ENCODE measurements at regions of chr14 and their contacts with region 1.

Region 1: GRCh38 chr14:76050797-76051392 is 65.3 kb downstream of the IFT43 start:
- DNase-seq: peak; percentile 8 to 68 (median 57)
- ATAC-seq: no peak
- H3K4me3 ChIP-seq: no peak overlapping the region
- H3K4me3 Mint-ChIP-seq: no peak overlapping the region
- H3K27ac ChIP-seq: no peak overlapping the region
- H3K27ac Mint-ChIP-seq: no peak overlapping the region
- H3K4me1 ChIP-seq: no peaks in the 10 kb centered on the region
- H3K4me1 Mint-ChIP-seq: no peaks in the 10 kb centered on the region
- H3K27me3 ChIP-seq: no peaks in the 10 kb centered on the region
- H3K27me3 Mint-ChIP-seq: no peaks in the 10 kb centered on the region
- CTCF ChIP-seq: peak; percentile 95

Region 2: GRCh38 chr14:76040704-76041103 is 10.2 kb before region 1 on chr14:
- CTCF ChIA-PET with region 1: interaction called, 11 read pairs
- POLR2A ChIA-PET with region 1: no interaction called
- intact Hi-C with region 1: no loop called
- DNase-seq: no peak
- ATAC-seq: no peak
- H3K4me3 ChIP-seq: no peak overlapping the region
- H3K4me3 Mint-ChIP-seq: no peak overlapping the region
- H3K27ac ChIP-seq: no peak overlapping the region
- H3K27ac Mint-ChIP-seq: no peak overlapping the region
- H3K4me1 ChIP-seq: no peaks in the 10 kb centered on the region
- H3K4me1 Mint-ChIP-seq: no peaks in the 10 kb centered on the region
- H3K27me3 ChIP-seq: no peaks in the 10 kb centered on the region
- H3K27me3 Mint-ChIP-seq: no peaks in the 10 kb centered on the region
- CTCF ChIP-seq: no peak

Region 3: GRCh38 chr14:76181546-76181945 is 130.7 kb after region 1 on chr14:
- CTCF ChIA-PET with region 1: interaction called, 3 read pairs
- POLR2A ChIA-PET with region 1: no interaction called
- intact Hi-C with region 1: loop called in 1 of 2 experiments (anchors 1 kb)
- DNase-seq: peak in 2 of 9 experiments; percentile 3 to 15
- ATAC-seq: no peak
- H3K4me3 ChIP-seq: no peak overlapping the region
- H3K4me3 Mint-ChIP-seq: no peak overlapping the region
- H3K27ac ChIP-seq: no peak overlapping the region
- H3K27ac Mint-ChIP-seq: peak overlapping the region; percentile 4
- H3K4me1 ChIP-seq: no peaks in the 10 kb centered on the region
- H3K4me1 Mint-ChIP-seq: peaks cover 8% of the 10 kb centered on the region
- H3K27me3 ChIP-seq: no peaks in the 10 kb centered on the region
- H3K27me3 Mint-ChIP-seq: no peaks in the 10 kb centered on the region
- CTCF ChIP-seq: peak; percentile 37

Region 4: DNA sequence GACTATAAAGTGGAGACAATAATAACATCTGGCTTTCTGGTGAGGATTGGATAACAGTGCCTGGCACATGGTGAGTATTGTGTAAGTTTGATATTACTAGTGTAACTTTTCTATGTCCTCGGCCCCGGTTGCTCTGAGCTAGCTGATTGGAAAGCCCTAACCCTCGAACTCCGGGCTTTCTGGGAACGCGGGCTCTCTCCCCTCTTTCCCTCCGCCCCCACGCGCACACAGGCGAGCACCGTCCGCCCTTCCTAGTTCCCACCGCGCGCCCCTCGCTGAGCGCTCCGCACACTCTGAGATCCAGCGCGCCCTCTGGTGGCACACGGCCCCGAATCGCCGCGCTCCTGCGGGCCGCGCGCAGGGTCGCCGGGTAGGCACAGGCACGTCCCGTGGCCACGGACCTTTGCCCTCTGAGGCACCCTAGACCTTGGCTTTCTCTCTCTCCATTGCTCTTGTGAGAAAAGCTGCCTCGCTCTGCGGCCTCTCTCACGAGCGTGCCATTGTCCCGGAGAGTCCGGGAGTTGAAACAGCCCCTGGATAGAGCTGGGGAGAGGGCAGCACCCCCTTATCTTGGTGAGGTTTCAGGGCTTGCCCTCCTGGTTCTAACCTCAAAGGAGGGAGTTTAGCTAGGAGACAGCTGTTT is 301.9 kb after region 1 on chr14:
- CTCF ChIA-PET with region 1: interaction called, 151 read pairs
- POLR2A ChIA-PET with region 1: no interaction called
- intact Hi-C with region 1: loop called in 1 of 2 experiments (anchors 1 kb)
- DNase-seq: peak; percentile 5 to 67 (median 50)
- ATAC-seq: no peak
- H3K4me3 ChIP-seq: no peak overlapping the region
- H3K4me3 Mint-ChIP-seq: peak overlapping the region; percentile 30
- H3K27ac ChIP-seq: no peak overlapping the region
- H3K27ac Mint-ChIP-seq: no peak overlapping the region
- H3K4me1 ChIP-seq: no peaks in the 10 kb centered on the region
- H3K4me1 Mint-ChIP-seq: peaks cover 4% of the 10 kb centered on the region
- H3K27me3 ChIP-seq: peaks cover 0 to 2% of the 10 kb centered on the region in 2 experiments
- H3K27me3 Mint-ChIP-seq: peaks cover 33% of the 10 kb centered on the region
- CTCF ChIP-seq: peak; percentile 51

Region 5: DNA sequence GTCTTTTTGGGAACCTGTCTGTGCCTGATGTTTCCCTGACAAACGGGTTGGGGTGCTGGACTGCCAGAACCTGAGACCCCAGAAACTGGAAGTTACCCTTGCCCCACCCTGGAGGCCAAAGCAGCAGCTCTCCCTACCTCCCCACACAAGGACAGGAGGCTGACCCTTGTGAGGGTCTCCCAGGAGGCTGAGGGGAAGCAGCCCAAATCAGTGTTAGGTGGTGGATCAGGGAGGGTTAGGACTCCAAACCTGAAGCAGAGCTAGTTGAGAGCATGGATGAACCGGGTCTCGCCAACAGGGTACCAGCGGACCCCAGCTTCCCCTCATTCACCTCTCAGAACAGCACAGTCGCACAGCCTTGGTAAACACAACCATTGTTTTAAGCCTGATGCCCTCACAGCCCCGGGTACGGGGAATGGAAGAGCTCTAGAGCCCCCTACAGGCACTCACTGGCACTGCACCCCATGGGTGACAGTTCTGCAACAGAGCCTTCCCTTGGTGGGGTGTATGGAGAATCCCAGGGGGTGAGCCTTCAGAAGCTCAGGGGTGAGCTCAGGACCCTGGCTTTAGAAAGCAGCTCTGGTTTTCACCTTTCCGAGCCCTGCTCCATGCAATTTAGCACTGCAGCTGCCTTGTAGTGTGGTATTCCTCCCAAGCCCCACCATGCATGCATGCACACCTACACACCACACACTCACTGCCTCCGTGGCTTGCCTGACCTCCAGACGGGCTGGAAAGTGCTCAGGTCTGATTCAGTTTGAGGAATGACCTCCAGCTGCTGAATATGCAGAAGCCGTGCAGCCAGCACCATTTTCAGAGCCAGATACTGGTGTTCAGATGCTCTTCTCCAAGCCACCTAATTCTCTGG is 336.3 kb after region 1 on chr14:
- CTCF ChIA-PET with region 1: interaction called, 19 read pairs
- POLR2A ChIA-PET with region 1: no interaction called
- intact Hi-C with region 1: loop called in 1 of 2 experiments (anchors 10 kb)
- DNase-seq: peak; percentile 17 to 65 (median 51)
- ATAC-seq: peak; percentile 49
- H3K4me3 ChIP-seq: no peak overlapping the region
- H3K4me3 Mint-ChIP-seq: no peak overlapping the region
- H3K27ac ChIP-seq: no peak overlapping the region
- H3K27ac Mint-ChIP-seq: no peak overlapping the region
- H3K4me1 ChIP-seq: no peaks in the 10 kb centered on the region
- H3K4me1 Mint-ChIP-seq: no peaks in the 10 kb centered on the region
- H3K27me3 ChIP-seq: no peaks in the 10 kb centered on the region
- H3K27me3 Mint-ChIP-seq: peaks cover 44% of the 10 kb centered on the region
- CTCF ChIP-seq: peak; percentile 74

Region 6: GRCh38 chr14:76647697-76648298 is 596.9 kb after region 1 on chr14:
- CTCF ChIA-PET with region 1: interaction called, 9 read pairs
- POLR2A ChIA-PET with region 1: no interaction called
- intact Hi-C with region 1: loop called in 1 of 2 experiments (anchors 1 kb)
- DNase-seq: peak in 2 of 9 experiments; percentile 23 to 37
- ATAC-seq: no peak
- H3K4me3 ChIP-seq: no peak overlapping the region
- H3K4me3 Mint-ChIP-seq: no peak overlapping the region
- H3K27ac ChIP-seq: no peak overlapping the region
- H3K27ac Mint-ChIP-seq: no peak overlapping the region
- H3K4me1 ChIP-seq: no peaks in the 10 kb centered on the region
- H3K4me1 Mint-ChIP-seq: no peaks in the 10 kb centered on the region
- H3K27me3 ChIP-seq: no peaks in the 10 kb centered on the region
- H3K27me3 Mint-ChIP-seq: peaks cover 6% of the 10 kb centered on the region
- CTCF ChIP-seq: peak; percentile 59

Region 7: GRCh38 chr14:77314043-77314442 is 1263.1 kb after region 1 on chr14:
- CTCF ChIA-PET with region 1: no interaction called
- POLR2A ChIA-PET with region 1: no interaction called
- intact Hi-C with region 1: loop called in 1 of 2 experiments (anchors 5 kb)
- DNase-seq: no peak
- ATAC-seq: no peak
- H3K4me3 ChIP-seq: no peak overlapping the region
- H3K4me3 Mint-ChIP-seq: no peak overlapping the region
- H3K27ac ChIP-seq: no peak overlapping the region
- H3K27ac Mint-ChIP-seq: no peak overlapping the region
- H3K4me1 ChIP-seq: no peaks in the 10 kb centered on the region
- H3K4me1 Mint-ChIP-seq: peaks cover 6% of the 10 kb centered on the region
- H3K27me3 ChIP-seq: no peaks in the 10 kb centered on the region
- H3K27me3 Mint-ChIP-seq: no peaks in the 10 kb centered on the region
- CTCF ChIP-seq: no peak